ENCODE measurements at regions of chr2 and their contacts with region 1.

Region 1: GRCh38 chr2:26785431-26786206 is at the start of gene CENPA:
- DNase-seq: peak; percentile 92 to 99 (median 94)
- ATAC-seq: peak; percentile 99
- H3K4me3 ChIP-seq: peak within 1 kb of the TSS; percentile 52 to 63
- H3K4me3 Mint-ChIP-seq: peak within 1 kb of the TSS; percentile 84
- H3K27ac ChIP-seq: peak within 1 kb of the TSS; percentile 58 to 61
- H3K27ac Mint-ChIP-seq: peak within 1 kb of the TSS; percentile 88
- H3K4me1 ChIP-seq: peaks cover 16% of the 10 kb centered on the region
- H3K4me1 Mint-ChIP-seq: peaks cover 12% of the 10 kb centered on the region
- H3K27me3 ChIP-seq: no peaks in the 10 kb centered on the region
- H3K27me3 Mint-ChIP-seq: peaks cover 11% of the 10 kb centered on the region
- CTCF ChIP-seq: no peak
- total RNA-seq, gene CENPA: 0.39 to 0.62 TPM

Region 2: DNA sequence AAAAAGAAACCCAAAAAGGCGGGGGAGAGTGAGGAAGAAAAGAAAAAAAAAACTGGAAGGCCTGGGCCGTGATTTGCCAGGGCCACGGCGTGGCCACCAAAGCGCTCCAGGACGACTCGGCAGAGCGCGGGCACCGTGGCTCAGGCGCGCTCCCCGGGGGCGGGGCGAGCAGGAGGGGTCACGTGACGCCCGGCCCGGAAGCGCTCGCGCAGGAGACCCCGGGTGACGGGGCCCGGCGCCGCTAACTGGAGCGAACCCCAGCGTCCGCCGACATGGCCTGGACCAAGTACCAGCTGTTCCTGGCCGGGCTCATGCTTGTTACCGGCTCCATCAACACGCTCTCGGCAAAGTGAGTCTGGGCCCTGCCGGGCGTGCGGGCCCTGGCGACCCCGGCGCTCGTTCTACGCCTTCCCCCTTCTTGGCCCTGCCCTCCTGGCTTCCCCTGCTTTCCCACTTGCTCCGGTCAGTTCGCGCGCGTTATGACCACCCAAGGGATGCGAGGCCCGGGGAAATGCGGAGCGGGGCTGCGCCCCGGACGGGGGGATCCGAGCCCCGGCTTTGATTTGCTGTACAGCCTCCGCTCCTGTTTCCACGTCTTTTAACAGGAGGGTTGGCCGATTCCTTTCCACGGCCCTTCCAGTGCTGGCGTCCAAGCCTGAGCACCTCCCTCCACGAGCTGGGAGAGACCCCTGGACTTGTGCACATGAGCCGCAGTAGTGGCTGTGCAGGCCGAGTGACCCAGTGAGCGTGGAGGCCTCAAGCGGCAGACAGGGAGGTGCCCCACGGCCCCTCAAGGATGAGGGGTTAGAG is 21.3 kb before region 1 on chr2 and contains the start of gene SLC35F6:
- CTCF ChIA-PET with region 1: no interaction called
- POLR2A ChIA-PET with region 1: no interaction called
- intact Hi-C with region 1: loop called (anchors 1 kb)
- DNase-seq: peak; percentile 61 to 92 (median 83)
- ATAC-seq: peak; percentile 94
- H3K4me3 ChIP-seq: peak within 1 kb of the TSS; percentile 95 to 100
- H3K4me3 Mint-ChIP-seq: peak within 1 kb of the TSS; percentile 94
- H3K27ac ChIP-seq: peak within 1 kb of the TSS; percentile 90 to 91
- H3K27ac Mint-ChIP-seq: peak within 1 kb of the TSS; percentile 96
- H3K4me1 ChIP-seq: peaks cover 26% of the 10 kb centered on the region
- H3K4me1 Mint-ChIP-seq: peaks cover 46% of the 10 kb centered on the region
- H3K27me3 ChIP-seq: no peaks in the 10 kb centered on the region
- H3K27me3 Mint-ChIP-seq: no peaks in the 10 kb centered on the region
- CTCF ChIP-seq: no peak
- total RNA-seq, gene SLC35F6: 30.4 to 30.7 TPM

Region 3: GRCh38 chr2:26801328-26801727 is 15.7 kb after region 1 on chr2:
- CTCF ChIA-PET with region 1: no interaction called
- POLR2A ChIA-PET with region 1: no interaction called
- intact Hi-C with region 1: no loop called
- DNase-seq: no peak
- ATAC-seq: no peak
- H3K4me3 ChIP-seq: no peak overlapping the region
- H3K4me3 Mint-ChIP-seq: no peak overlapping the region
- H3K27ac ChIP-seq: no peak overlapping the region
- H3K27ac Mint-ChIP-seq: no peak overlapping the region
- H3K4me1 ChIP-seq: no peaks in the 10 kb centered on the region
- H3K4me1 Mint-ChIP-seq: no peaks in the 10 kb centered on the region
- H3K27me3 ChIP-seq: no peaks in the 10 kb centered on the region
- H3K27me3 Mint-ChIP-seq: no peaks in the 10 kb centered on the region
- CTCF ChIP-seq: no peak

Measured in CD8-positive, alpha-beta T cell (primary cell).